OCI-LY7 (cell line): ENCODE measurements at regions of chr1 and their contacts with region 1.

Region 1: DNA sequence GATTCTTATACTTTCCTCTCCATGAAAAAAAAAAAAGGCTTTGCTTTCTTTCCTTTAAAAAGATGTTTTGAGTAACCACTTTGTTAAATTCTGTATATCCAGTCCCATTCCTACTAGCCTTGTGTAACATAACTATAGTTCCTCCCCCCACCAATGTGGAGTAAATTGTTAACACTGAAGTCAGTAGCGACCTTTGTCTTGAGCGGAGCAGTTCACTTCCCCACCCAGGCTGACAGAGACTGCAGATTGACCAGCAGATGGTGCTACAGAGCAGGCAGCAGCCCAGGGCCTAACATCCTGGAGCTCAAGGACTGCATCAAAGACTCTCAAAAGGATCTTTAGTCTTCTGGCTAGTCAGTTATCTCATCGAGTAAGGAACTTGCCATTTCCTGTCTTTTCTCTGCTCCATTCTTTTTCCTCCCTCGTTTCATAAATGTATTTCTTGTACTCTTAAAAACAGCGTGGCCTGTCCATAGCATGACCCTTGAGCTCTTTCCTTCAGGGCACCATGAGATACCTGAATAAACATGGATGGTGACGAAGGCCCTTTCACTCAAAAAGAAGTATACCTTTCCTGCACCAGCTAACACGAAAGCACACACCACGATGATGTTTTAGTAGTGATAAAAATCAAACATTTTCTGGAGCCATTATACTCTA is 503.5 kb upstream of the PKN2 start:
- DNase-seq: peak; percentile 64
- H3K4me3 ChIP-seq: no peak overlapping the region
- H3K27ac ChIP-seq: no peak overlapping the region
- H3K4me1 ChIP-seq: no peaks in the 10 kb centered on the region
- CTCF ChIP-seq: peak; percentile 95

Region 2: DNA sequence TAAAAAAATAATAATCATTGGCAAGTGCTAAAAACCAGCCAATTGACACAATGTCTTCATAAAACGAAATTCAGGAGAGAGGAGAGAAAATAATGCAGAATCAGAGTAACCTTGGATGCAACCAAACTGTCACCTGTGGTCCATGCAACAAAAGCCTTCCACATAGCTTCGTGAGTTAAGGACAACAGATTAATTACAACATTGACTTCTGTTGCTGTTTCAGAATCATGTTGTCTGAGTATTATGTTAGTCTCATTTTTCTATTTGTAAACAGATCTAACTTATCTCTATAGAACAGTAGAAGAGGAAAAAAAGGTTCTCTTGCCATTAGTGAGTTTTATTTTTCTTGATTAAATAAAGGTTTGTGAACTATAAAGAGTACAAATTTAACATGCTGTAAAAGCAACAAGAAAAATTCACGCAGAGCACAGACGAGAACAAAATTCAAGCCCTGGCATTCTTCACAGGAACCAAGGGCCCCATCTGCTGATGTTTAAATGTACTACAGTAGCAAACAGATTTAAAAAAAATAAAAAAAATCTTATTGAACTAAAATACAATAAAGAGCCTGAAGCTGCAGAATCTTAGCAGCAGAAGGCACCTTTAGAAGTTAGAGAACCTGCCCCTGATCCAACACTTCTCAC is 122.4 kb after region 1 on chr1:
- CTCF ChIA-PET with region 1: no interaction called
- POLR2A ChIA-PET with region 1: no interaction called
- intact Hi-C with region 1: loop called (anchors 5 kb)
- DNase-seq: peak; percentile 2
- H3K4me3 ChIP-seq: no peak overlapping the region
- H3K27ac ChIP-seq: no peak overlapping the region
- H3K4me1 ChIP-seq: no peaks in the 10 kb centered on the region
- CTCF ChIP-seq: peak; percentile 56

Region 3: GRCh38 chr1:88350648-88351047 is 170.1 kb after region 1 on chr1:
- CTCF ChIA-PET with region 1: no interaction called
- POLR2A ChIA-PET with region 1: no interaction called
- intact Hi-C with region 1: no loop called
- DNase-seq: no peak
- H3K4me3 ChIP-seq: no peak overlapping the region
- H3K27ac ChIP-seq: no peak overlapping the region
- H3K4me1 ChIP-seq: no peaks in the 10 kb centered on the region
- CTCF ChIP-seq: no peak

Region 4: DNA sequence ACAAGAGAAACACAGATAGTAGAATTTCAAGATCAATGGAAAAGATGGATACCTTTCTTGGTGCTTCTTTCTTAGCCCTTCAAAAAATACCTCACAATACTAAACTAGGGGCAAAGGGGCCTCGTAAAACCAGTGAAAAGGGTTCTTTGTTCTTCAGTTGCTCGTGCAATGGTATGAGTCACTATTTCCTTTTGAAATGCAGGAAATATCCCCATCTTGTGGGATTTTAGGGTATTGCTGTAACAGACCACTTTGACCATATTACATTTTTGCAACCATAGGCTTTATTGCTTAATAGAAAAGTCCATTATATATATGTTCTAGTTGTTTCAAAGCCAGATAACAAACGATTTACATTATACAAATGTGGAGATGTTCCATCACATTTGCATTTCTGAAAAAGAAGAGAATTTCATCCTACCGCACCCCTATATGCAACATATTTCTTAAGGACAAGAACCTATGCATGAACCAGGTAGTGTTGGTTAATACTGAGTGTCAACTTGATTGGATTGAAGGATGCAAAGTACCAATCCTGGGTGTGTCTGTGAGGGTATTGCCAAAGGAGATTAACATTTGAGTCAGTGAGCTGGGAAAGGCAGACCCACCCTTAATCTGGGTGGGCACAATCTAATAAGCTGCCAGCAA is 414.9 kb after region 1 on chr1:
- CTCF ChIA-PET with region 1: interaction called, 4 read pairs
- POLR2A ChIA-PET with region 1: no interaction called
- intact Hi-C with region 1: loop called (anchors 1 kb)
- DNase-seq: peak; percentile 26
- H3K4me3 ChIP-seq: no peak overlapping the region
- H3K27ac ChIP-seq: no peak overlapping the region
- H3K4me1 ChIP-seq: no peaks in the 10 kb centered on the region
- CTCF ChIP-seq: peak; percentile 79